ENCODE measurements at regions of chr2 and their contacts with region 1.

Region 1: GRCh38 chr2:88055371-88056128 is at the start of gene KRCC1:
- DNase-seq: peak; percentile 91 to 95 (median 93)
- ATAC-seq: peak; percentile 96
- H3K4me3 ChIP-seq: peak within 1 kb of the TSS; percentile 75
- H3K4me3 Mint-ChIP-seq: peak within 1 kb of the TSS; percentile 89 to 97 (median 92)
- H3K27ac ChIP-seq: peak within 1 kb of the TSS; percentile 96
- H3K27ac Mint-ChIP-seq: peak within 1 kb of the TSS; percentile 92 to 100 (median 97)
- H3K4me1 ChIP-seq: peaks cover 13 to 26% of the 10 kb centered on the region in 2 donors
- H3K4me1 Mint-ChIP-seq: peaks cover 33 to 65% (median 54%) of the 10 kb centered on the region in 7 donors
- H3K27me3 ChIP-seq: no peaks in the 10 kb centered on the region
- H3K27me3 Mint-ChIP-seq: no peaks in the 10 kb centered on the region
- total RNA-seq, gene KRCC1: 7.1 to 33.9 (median 29.3) TPM

Region 2: DNA sequence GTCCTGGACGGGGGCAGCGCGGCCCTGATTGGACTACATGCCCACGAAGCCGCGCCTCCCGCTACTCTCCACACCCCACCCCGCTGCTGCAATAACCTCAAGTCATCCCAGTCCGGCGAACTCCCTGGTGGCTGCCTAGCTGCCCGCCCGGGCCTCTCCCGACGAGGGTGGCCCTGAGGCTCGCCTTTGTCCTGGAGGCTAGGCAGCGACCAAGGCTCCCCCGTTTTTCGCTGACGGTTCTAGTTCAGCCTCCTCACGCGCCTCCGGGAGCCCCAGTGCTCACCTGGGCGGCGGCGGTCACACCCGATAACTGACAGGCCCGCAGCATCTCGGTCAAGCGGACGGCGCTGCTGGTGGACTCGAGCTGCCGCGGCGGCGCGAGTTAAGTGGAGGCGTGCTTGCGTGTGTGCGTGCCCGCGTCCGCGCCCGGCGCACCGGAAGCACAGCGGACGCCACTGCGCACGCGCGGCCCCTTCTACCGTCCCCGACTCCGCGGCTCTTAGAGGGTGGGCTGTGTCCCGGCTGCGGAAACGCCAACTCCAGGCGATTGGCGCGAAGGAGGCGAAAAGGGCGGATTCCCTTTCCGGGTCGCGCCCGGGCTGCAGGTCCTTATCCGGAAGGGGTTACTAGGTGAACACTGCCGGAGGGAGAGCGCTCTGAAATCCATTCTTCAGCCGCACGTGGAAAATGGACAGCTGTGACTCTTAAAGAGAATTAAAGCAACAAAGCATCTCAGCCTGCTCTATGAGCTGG is 1860.3 kb before region 1 on chr2 and contains the start of gene IMMT:
- CTCF ChIA-PET with region 1: no interaction called
- POLR2A ChIA-PET with region 1: no interaction called
- intact Hi-C with region 1: loop called in 1 of 2 experiments (anchors 1 kb)
- DNase-seq: peak; percentile 86 to 96 (median 94)
- ATAC-seq: peak; percentile 94
- H3K4me3 ChIP-seq: peak within 1 kb of the TSS; percentile 74
- H3K4me3 Mint-ChIP-seq: peak within 1 kb of the TSS; percentile 86 to 99 (median 95)
- H3K27ac ChIP-seq: peak within 1 kb of the TSS; percentile 97
- H3K27ac Mint-ChIP-seq: peak within 1 kb of the TSS; percentile 82 to 97 (median 90)
- H3K4me1 ChIP-seq: peaks cover 15 to 23% of the 10 kb centered on the region in 2 donors
- H3K4me1 Mint-ChIP-seq: peaks cover 35 to 74% (median 60%) of the 10 kb centered on the region in 7 donors
- H3K27me3 ChIP-seq: no peaks in the 10 kb centered on the region
- H3K27me3 Mint-ChIP-seq: no peaks in the 10 kb centered on the region
- total RNA-seq, gene IMMT: 59.2 to 164 (median 77.0) TPM

Region 3: DNA sequence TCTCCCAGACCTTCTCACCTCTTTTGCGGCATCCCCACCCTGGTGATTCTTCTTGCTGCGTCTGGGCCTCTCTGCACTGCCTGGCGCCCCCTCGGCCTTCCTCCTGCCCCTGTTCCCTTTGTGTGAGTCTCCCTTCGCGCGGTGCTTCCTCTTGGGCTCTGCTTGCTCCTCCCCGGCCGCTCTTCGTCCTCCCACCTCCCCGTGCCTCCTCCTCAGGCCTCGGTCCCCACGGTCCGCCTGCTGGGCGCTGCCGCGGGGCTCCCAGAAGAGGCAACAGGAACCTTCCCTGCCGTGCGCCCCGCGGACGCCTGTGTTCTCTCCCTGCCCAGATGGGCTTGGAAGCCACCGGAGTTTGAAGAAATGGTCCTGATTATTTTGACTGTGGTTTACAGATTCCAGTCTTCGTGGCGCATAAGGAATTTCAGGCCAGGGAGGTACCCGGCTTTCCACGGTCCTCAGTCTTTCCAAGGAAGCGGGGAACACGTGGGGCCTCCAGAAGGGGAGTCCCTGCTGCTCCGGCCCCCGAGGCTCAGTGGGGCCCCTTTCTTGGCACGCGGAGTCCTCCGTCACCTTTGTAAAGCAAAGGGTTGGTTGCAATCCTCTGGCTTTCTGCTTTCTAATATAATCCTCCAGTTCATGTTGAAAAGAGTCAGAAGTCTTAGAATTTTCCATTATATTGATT is 52.3 kb before region 1 on chr2:
- CTCF ChIA-PET with region 1: no interaction called
- POLR2A ChIA-PET with region 1: no interaction called
- intact Hi-C with region 1: no loop called
- DNase-seq: no peak
- ATAC-seq: no peak
- H3K4me3 ChIP-seq: no peak overlapping the region
- H3K4me3 Mint-ChIP-seq: no peak overlapping the region
- H3K27ac ChIP-seq: no peak overlapping the region
- H3K27ac Mint-ChIP-seq: no peak overlapping the region
- H3K4me1 ChIP-seq: no peaks in the 10 kb centered on the region
- H3K4me1 Mint-ChIP-seq: peaks cover 0 to 7% (median 4%) of the 10 kb centered on the region in 7 donors
- H3K27me3 ChIP-seq: no peaks in the 10 kb centered on the region
- H3K27me3 Mint-ChIP-seq: peaks cover 0 to 3% (median 0%) of the 10 kb centered on the region in 5 donors

Region 4: DNA sequence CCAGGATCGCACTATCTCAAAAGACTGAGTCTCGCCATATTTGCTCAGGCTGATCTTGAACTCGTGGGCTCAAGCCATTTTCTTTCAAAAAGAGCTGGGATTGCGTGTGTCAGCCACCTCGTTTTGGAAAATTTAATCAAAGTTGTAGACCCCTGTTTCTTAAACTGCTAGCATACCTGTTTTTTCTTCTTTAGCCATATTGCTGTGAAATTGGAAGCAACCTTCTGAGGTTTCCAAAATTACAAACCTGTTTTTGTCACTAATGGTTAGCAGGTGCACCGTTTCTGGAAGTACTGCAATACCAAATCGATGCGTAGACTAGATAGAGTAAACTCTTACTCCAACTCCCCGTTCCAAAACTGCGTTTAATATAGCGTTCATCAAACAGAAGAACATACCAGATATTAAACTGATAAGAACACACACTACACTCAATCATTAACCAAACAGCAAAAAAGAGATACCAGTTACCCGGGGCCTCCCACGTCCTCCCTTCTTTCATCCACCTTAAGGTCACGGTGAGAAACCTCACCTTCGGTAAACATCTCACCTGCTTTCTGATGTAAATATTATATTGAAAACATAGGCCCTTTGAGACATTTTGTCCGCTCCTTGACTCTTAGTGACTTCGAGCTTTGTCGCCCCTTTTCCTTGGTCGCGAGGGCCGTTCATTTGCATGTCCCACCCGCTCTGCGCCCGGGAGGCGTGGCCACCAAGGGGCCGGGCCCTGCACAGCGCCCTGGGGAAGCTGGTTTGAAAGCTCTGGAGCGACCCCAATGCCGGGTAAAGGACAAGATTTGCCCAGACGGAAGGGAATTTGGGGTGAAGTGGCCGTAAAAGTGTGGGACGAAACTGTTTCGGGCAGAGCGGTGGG is 39.2 kb before region 1 on chr2 and contains the start of gene RNU2-63P:
- CTCF ChIA-PET with region 1: interaction called, 3 read pairs
- POLR2A ChIA-PET with region 1: interaction called, 6 read pairs
- intact Hi-C with region 1: loop called (anchors 1 kb)
- DNase-seq: peak; percentile 70 to 87 (median 84)
- ATAC-seq: peak; percentile 87
- H3K4me3 ChIP-seq: peak within 1 kb of the TSS; percentile 93
- H3K4me3 Mint-ChIP-seq: peak within 1 kb of the TSS; percentile 95 to 99 (median 97)
- H3K27ac ChIP-seq: peak within 1 kb of the TSS; percentile 90
- H3K27ac Mint-ChIP-seq: peak within 1 kb of the TSS; percentile 97 to 100 (median 99)
- H3K4me1 ChIP-seq: peaks cover 0 to 4% of the 10 kb centered on the region in 2 donors
- H3K4me1 Mint-ChIP-seq: peaks cover 5 to 29% (median 21%) of the 10 kb centered on the region in 7 donors
- H3K27me3 ChIP-seq: no peaks in the 10 kb centered on the region
- H3K27me3 Mint-ChIP-seq: no peaks in the 10 kb centered on the region
- total RNA-seq, gene RNU2-63P: 14.5 to 28.7 (median 16.6) TPM in 3 of 5 experiments, not detected in the others

Region 5: GRCh38 chr2:88097192-88097591 is 41.6 kb after region 1 on chr2:
- CTCF ChIA-PET with region 1: no interaction called
- POLR2A ChIA-PET with region 1: no interaction called
- intact Hi-C with region 1: no loop called
- DNase-seq: no peak
- ATAC-seq: no peak
- H3K4me3 ChIP-seq: no peak overlapping the region
- H3K4me3 Mint-ChIP-seq: no peak overlapping the region
- H3K27ac ChIP-seq: no peak overlapping the region
- H3K27ac Mint-ChIP-seq: peak overlapping the region in 1 of 9 donors; percentile 70
- H3K4me1 ChIP-seq: peaks cover 0 to 5% of the 10 kb centered on the region in 2 donors
- H3K4me1 Mint-ChIP-seq: peaks cover 0 to 15% (median 8%) of the 10 kb centered on the region in 7 donors
- H3K27me3 ChIP-seq: no peaks in the 10 kb centered on the region
- H3K27me3 Mint-ChIP-seq: peaks cover 0 to 4% (median 0%) of the 10 kb centered on the region in 5 donors

Region 6: DNA sequence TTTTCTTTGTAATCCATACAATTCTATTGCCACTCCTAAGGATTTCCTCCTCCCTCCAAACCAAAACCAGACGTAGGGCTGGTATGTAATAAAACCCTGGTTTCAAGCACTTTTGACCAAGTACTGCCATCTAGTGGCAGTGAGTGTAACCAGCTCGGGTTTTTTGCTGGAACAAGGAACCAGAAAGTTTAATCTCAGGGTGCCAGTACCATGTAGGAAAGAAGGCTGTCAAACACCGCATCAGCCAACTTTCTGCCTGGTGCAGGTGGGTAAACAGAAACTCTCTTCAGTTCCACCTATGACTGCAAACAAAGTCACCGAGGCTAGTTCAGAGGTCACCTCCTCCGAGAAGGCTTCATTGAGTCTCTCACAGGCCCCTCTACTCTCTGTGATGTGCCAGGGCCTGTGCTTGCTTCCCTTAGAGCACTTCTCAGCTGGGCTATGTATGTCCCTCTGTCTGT is 104.4 kb after region 1 on chr2:
- CTCF ChIA-PET with region 1: interaction called, 115 read pairs
- POLR2A ChIA-PET with region 1: no interaction called
- intact Hi-C with region 1: loop called in 1 of 2 experiments (anchors 1 kb)
- DNase-seq: peak in 8 of 9 donors; percentile 22 to 65 (median 57)
- ATAC-seq: peak; percentile 82
- H3K4me3 ChIP-seq: no peak overlapping the region
- H3K4me3 Mint-ChIP-seq: no peak overlapping the region
- H3K27ac ChIP-seq: no peak overlapping the region
- H3K27ac Mint-ChIP-seq: no peak overlapping the region
- H3K4me1 ChIP-seq: no peaks in the 10 kb centered on the region
- H3K4me1 Mint-ChIP-seq: peaks cover 0 to 5% (median 0%) of the 10 kb centered on the region in 7 donors
- H3K27me3 ChIP-seq: no peaks in the 10 kb centered on the region
- H3K27me3 Mint-ChIP-seq: peaks cover 0 to 12% (median 0%) of the 10 kb centered on the region in 5 donors

Region 7: DNA sequence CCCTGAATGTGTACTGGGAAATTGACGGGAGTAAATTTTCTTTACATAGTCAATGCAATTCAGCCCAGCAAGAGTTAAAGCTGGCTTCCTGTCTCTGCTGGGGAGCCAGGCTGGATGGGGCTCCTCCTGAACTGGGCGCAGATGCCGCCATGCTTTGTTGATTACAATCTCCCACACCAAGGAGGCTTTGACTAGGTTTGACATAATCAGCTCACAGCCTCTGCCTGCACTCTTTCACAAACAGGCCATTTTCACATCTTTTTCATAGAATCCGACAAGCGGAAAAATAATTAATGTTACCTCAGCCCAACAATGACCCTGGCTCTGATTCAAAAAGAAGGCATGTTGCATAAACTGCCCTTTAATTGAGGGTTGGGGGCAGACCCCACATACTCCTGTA is 342.6 kb after region 1 on chr2:
- CTCF ChIA-PET with region 1: no interaction called
- POLR2A ChIA-PET with region 1: no interaction called
- intact Hi-C with region 1: no loop called
- DNase-seq: no peak
- ATAC-seq: no peak
- H3K4me3 ChIP-seq: no peak overlapping the region
- H3K4me3 Mint-ChIP-seq: no peak overlapping the region
- H3K27ac ChIP-seq: no peak overlapping the region
- H3K27ac Mint-ChIP-seq: no peak overlapping the region
- H3K4me1 ChIP-seq: no peaks in the 10 kb centered on the region
- H3K4me1 Mint-ChIP-seq: no peaks in the 10 kb centered on the region
- H3K27me3 ChIP-seq: no peaks in the 10 kb centered on the region
- H3K27me3 Mint-ChIP-seq: peaks cover 2 to 41% (median 37%) of the 10 kb centered on the region in 5 donors

Region 8: GRCh38 chr2:88627056-88627855 is 571.7 kb after region 1 on chr2 and contains the start of gene EIF2AK3:
- CTCF ChIA-PET with region 1: no interaction called
- POLR2A ChIA-PET with region 1: no interaction called
- intact Hi-C with region 1: loop called (anchors 2 to 10 kb)
- DNase-seq: peak; percentile 85 to 99 (median 97)
- ATAC-seq: peak; percentile 89
- H3K4me3 ChIP-seq: peak within 1 kb of the TSS; percentile 93
- H3K4me3 Mint-ChIP-seq: peak within 1 kb of the TSS in 6 of 10 donors; percentile 94 to 98 (median 96)
- H3K27ac ChIP-seq: peak within 1 kb of the TSS; percentile 96
- H3K27ac Mint-ChIP-seq: peak within 1 kb of the TSS in 7 of 9 donors; percentile 86 to 98 (median 95)
- H3K4me1 ChIP-seq: peaks cover 12 to 18% of the 10 kb centered on the region in 2 donors
- H3K4me1 Mint-ChIP-seq: peaks cover 5 to 19% (median 13%) of the 10 kb centered on the region in 7 donors
- H3K27me3 ChIP-seq: no peaks in the 10 kb centered on the region
- H3K27me3 Mint-ChIP-seq: no peaks in the 10 kb centered on the region
- total RNA-seq, gene EIF2AK3: 26.1 to 36.5 (median 28.6) TPM

Region 9: DNA sequence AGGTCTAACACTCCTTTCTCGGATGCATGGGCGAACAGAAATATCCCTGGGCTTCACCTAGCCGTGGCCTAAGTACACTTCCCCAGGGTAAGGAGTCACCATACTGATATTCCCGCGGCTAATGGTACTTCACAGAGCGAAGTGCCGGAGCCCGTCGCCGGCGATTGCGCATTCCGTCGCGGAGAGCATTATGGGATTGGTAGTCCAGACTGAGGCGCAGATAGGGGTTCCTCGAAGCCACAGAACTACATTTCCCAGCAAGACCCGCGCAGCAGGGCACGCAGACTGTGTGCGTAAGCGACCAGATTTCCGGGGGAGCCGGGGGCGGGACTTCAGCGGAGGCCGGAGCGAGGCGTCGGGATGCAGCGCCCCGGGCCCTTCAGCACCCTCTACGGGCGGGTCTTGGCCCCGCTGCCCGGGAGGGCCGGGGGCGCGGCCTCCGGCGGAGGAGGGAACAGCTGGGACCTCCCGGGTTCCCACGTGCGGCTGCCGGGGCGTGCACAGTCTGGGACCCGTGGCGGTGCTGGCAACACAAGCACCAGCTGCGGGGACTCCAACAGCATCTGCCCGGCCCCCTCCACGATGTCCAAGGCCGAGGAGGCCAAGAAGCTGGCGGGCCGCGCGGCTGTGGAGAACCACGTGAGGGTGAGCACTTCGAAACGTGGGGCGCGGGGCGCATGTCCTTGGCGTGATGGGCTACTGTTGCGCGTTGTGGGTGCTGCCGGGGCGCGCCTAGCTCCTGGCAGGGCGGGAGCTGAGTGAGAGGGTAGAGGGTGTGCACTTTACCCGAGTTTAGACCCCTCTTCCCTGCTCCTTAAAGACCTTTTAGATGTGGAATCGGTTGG is 636.0 kb after region 1 on chr2 and contains the start of gene RPIA:
- CTCF ChIA-PET with region 1: no interaction called
- POLR2A ChIA-PET with region 1: no interaction called
- intact Hi-C with region 1: loop called (anchors 1 kb)
- DNase-seq: peak; percentile 93 to 99 (median 98)
- ATAC-seq: peak; percentile 98
- H3K4me3 ChIP-seq: peak within 1 kb of the TSS; percentile 89
- H3K4me3 Mint-ChIP-seq: peak within 1 kb of the TSS; percentile 93 to 99 (median 98)
- H3K27ac ChIP-seq: peak within 1 kb of the TSS; percentile 83
- H3K27ac Mint-ChIP-seq: peak within 1 kb of the TSS; percentile 86 to 98 (median 94)
- H3K4me1 ChIP-seq: peaks cover 14 to 21% of the 10 kb centered on the region in 2 donors
- H3K4me1 Mint-ChIP-seq: peaks cover 24 to 70% (median 67%) of the 10 kb centered on the region in 7 donors
- H3K27me3 ChIP-seq: no peaks in the 10 kb centered on the region
- H3K27me3 Mint-ChIP-seq: no peaks in the 10 kb centered on the region
- total RNA-seq, gene RPIA: 16.4 to 38.4 (median 23.1) TPM

Region 10: GRCh38 chr2:88813612-88814011 is 758.1 kb after region 1 on chr2:
- CTCF ChIA-PET with region 1: no interaction called
- POLR2A ChIA-PET with region 1: no interaction called
- intact Hi-C with region 1: no loop called
- DNase-seq: no peak
- ATAC-seq: no peak
- H3K4me3 ChIP-seq: no peak overlapping the region
- H3K4me3 Mint-ChIP-seq: no peak overlapping the region
- H3K27ac ChIP-seq: no peak overlapping the region
- H3K27ac Mint-ChIP-seq: no peak overlapping the region
- H3K4me1 ChIP-seq: no peaks in the 10 kb centered on the region
- H3K4me1 Mint-ChIP-seq: no peaks in the 10 kb centered on the region
- H3K27me3 ChIP-seq: no peaks in the 10 kb centered on the region
- H3K27me3 Mint-ChIP-seq: peaks cover 0 to 14% (median 10%) of the 10 kb centered on the region in 5 donors

Measured in naive thymus-derived CD4-positive, alpha-beta T cell (primary cell).